T-cell (primary cell): ENCODE measurements at regions of chrX and their contacts with region 1.

Region 1: GRCh38 chrX:69988955-69989394 is 60.8 kb downstream of the AWAT2 start:
- DNase-seq: peak in 3 of 35 experiments; percentile 0 to 4 (median 0)
- ATAC-seq: peak in 2 of 4 experiments; percentile 56
- H3K4me3 ChIP-seq: no peak overlapping the region
- H3K4me3 Mint-ChIP-seq: no peak overlapping the region
- H3K27ac ChIP-seq: peak overlapping the region; percentile 28
- H3K27ac Mint-ChIP-seq: no peak overlapping the region
- H3K4me1 ChIP-seq: no peaks in the 10 kb centered on the region
- H3K4me1 Mint-ChIP-seq: peaks cover 0 to 12% (median 0%) of the 10 kb centered on the region in 3 donors
- H3K27me3 ChIP-seq: no peaks in the 10 kb centered on the region
- H3K27me3 Mint-ChIP-seq: peaks cover 0 to 4% of the 10 kb centered on the region in 2 donors

Region 2: GRCh38 chrX:69243276-69243675 is 745.7 kb before region 1 on chrX:
- CTCF ChIA-PET with region 1: no interaction called
- POLR2A ChIA-PET with region 1: no interaction called
- DNase-seq: no peak
- ATAC-seq: no peak
- H3K4me3 ChIP-seq: no peak overlapping the region
- H3K4me3 Mint-ChIP-seq: no peak overlapping the region
- H3K27ac ChIP-seq: no peak overlapping the region
- H3K27ac Mint-ChIP-seq: no peak overlapping the region
- H3K4me1 ChIP-seq: no peaks in the 10 kb centered on the region
- H3K4me1 Mint-ChIP-seq: no peaks in the 10 kb centered on the region
- H3K27me3 ChIP-seq: peaks cover 0 to 5% of the 10 kb centered on the region in 2 experiments
- H3K27me3 Mint-ChIP-seq: peaks cover 11 to 47% of the 10 kb centered on the region in 2 donors

Region 3: GRCh38 chrX:70025464-70025863 is 36.5 kb after region 1 on chrX:
- CTCF ChIA-PET with region 1: no interaction called
- POLR2A ChIA-PET with region 1: interaction called in 1 of 2 experiments, 22 read pairs
- DNase-seq: no peak
- ATAC-seq: no peak
- H3K4me3 ChIP-seq: no peak overlapping the region
- H3K4me3 Mint-ChIP-seq: peak overlapping the region in 1 of 3 donors; percentile 2
- H3K27ac ChIP-seq: no peak overlapping the region
- H3K27ac Mint-ChIP-seq: peak overlapping the region; percentile 41 to 78
- H3K4me1 ChIP-seq: peaks cover 0 to 16% of the 10 kb centered on the region in 2 experiments
- H3K4me1 Mint-ChIP-seq: peaks cover 23 to 57% (median 23%) of the 10 kb centered on the region in 3 donors
- H3K27me3 ChIP-seq: no peaks in the 10 kb centered on the region
- H3K27me3 Mint-ChIP-seq: peaks cover 0 to 24% of the 10 kb centered on the region in 2 donors

Region 4: GRCh38 chrX:70096052-70096451 is 107.1 kb after region 1 on chrX:
- CTCF ChIA-PET with region 1: no interaction called
- POLR2A ChIA-PET with region 1: no interaction called
- DNase-seq: no peak
- ATAC-seq: no peak
- H3K4me3 ChIP-seq: no peak overlapping the region
- H3K4me3 Mint-ChIP-seq: no peak overlapping the region
- H3K27ac ChIP-seq: no peak overlapping the region
- H3K27ac Mint-ChIP-seq: no peak overlapping the region
- H3K4me1 ChIP-seq: no peaks in the 10 kb centered on the region
- H3K4me1 Mint-ChIP-seq: no peaks in the 10 kb centered on the region
- H3K27me3 ChIP-seq: peaks cover 0 to 5% of the 10 kb centered on the region in 2 experiments
- H3K27me3 Mint-ChIP-seq: peaks cover 11 to 31% of the 10 kb centered on the region in 2 donors